Astrocyte of the cerebellum (primary cell): ENCODE measurements at regions of chr2 and their contacts with region 1.

Region 1: GRCh38 chr2:181364492-181365170 is 92.6 kb upstream of the ITGA4 start:
- DNase-seq: no peak
- H3K4me3 ChIP-seq: no peak overlapping the region
- CTCF ChIP-seq: no peak

Region 2: GRCh38 chr2:181326661-181327060 is 38.0 kb before region 1 on chr2:
- in situ Hi-C with region 1: loop called (anchors 5 kb)
- DNase-seq: no peak
- H3K4me3 ChIP-seq: no peak overlapping the region
- CTCF ChIP-seq: no peak